AG04449 (cell line): ENCODE measurements at regions of chr10 and their contacts with region 1.

Region 1: GRCh38 chr10:30534465-30535144 is 94.9 kb downstream of the LYZL2 start:
- DNase-seq: no peak
- H3K4me3 ChIP-seq: no peak overlapping the region
- CTCF ChIP-seq: peak; percentile 79

Region 2: DNA sequence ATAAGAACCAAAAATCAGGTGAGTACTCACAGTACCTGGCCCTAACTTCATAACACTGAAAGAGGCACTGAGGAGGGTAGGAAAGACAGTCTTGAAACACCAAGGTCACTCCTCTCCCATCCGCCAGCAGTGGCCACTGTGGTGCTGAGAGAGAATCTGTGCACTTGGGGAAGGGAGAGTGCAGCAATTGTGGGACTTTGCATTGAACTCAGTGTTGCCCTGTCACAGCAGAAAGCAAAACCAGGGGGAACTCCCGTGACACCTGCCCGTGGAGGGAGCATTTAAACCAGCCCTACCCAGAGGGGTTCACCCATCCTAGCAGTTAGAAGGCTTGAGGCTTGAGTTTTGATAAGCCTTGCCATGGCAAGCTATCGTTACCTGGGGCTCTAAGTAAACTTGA is 135.8 kb before region 1 on chr10:
- CTCF ChIA-PET with region 1: interaction called, 68 read pairs
- POLR2A ChIA-PET with region 1: no interaction called
- DNase-seq: no peak
- H3K4me3 ChIP-seq: no peak overlapping the region
- CTCF ChIP-seq: peak; percentile 7

Region 3: GRCh38 chr10:30422981-30423654 is 111.5 kb before region 1 on chr10:
- CTCF ChIA-PET with region 1: interaction called, 20 read pairs
- POLR2A ChIA-PET with region 1: no interaction called
- DNase-seq: no peak
- H3K4me3 ChIP-seq: no peak overlapping the region
- CTCF ChIP-seq: no peak

Region 4: DNA sequence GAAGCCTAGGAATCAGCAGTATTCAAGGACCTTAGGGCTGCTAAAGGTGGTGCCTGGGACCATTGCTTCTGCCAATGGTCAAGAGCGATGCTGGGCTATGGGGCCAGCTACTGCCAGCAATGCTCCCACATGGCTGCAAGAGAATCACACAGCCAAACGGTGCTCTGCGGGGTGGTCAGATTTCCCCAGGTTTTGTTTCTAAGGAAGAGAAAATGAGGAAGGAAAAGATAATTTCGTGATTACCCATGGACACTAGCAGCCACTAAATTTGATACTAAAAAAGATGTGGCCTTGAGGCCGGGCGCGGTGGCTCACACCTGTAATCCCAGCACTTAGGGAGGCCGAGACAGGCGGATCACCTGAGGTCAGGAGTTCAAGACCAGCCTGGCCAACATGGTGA is 11.9 kb after region 1 on chr10:
- CTCF ChIA-PET with region 1: interaction called, 10 read pairs
- POLR2A ChIA-PET with region 1: no interaction called
- DNase-seq: no peak
- H3K4me3 ChIP-seq: no peak overlapping the region
- CTCF ChIP-seq: no peak